ENCODE measurements at regions of chr15 and their contacts with region 1.

Region 1: GRCh38 chr15:46213551-46213950 is 578.7 kb downstream of the SQOR start:
- DNase-seq: no peak
- H3K4me3 ChIP-seq: no peak overlapping the region
- H3K27ac ChIP-seq: no peak overlapping the region
- H3K4me1 ChIP-seq: no peaks in the 10 kb centered on the region
- H3K27me3 ChIP-seq: no peaks in the 10 kb centered on the region
- CTCF ChIP-seq: no peak

Region 2: GRCh38 chr15:46059921-46060594 is 153.5 kb before region 1 on chr15:
- intact Hi-C with region 1: no loop called
- DNase-seq: no peak
- H3K4me3 ChIP-seq: no peak overlapping the region
- H3K27ac ChIP-seq: no peak overlapping the region
- H3K4me1 ChIP-seq: no peaks in the 10 kb centered on the region
- H3K27me3 ChIP-seq: no peaks in the 10 kb centered on the region
- CTCF ChIP-seq: no peak

Region 3: GRCh38 chr15:46322753-46323152 is 109.2 kb after region 1 on chr15:
- intact Hi-C with region 1: no loop called
- DNase-seq: no peak
- H3K4me3 ChIP-seq: no peak overlapping the region
- H3K27ac ChIP-seq: no peak overlapping the region
- H3K4me1 ChIP-seq: no peaks in the 10 kb centered on the region
- H3K27me3 ChIP-seq: no peaks in the 10 kb centered on the region
- CTCF ChIP-seq: no peak

Region 4: GRCh38 chr15:46442184-46442583 is 228.6 kb after region 1 on chr15:
- intact Hi-C with region 1: no loop called
- DNase-seq: no peak
- H3K4me3 ChIP-seq: no peak overlapping the region
- H3K27ac ChIP-seq: peak overlapping the region in 1 of 2 donors; percentile 6
- H3K4me1 ChIP-seq: no peaks in the 10 kb centered on the region
- H3K27me3 ChIP-seq: no peaks in the 10 kb centered on the region
- CTCF ChIP-seq: no peak

Region 5: DNA sequence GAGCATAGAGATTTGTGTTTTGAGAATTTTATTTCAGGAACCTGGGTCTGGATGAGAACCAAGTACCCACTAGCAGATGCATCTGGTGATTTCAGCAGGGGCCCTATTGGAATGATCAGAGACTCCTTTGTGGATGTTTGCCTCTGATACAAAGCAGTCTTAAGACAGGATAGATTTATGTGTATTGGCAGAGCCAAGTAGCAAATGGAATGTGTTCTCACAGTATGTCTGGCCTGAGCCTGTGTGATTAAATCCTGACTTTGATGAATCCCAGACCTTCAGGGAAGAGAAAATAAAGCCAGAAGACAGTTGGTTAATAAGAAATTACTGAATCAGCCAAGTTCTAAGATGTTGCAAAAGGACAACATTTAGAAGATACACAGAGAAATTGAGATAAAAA is 748.2 kb after region 1 on chr15:
- intact Hi-C with region 1: loop called (anchors 5 kb)
- DNase-seq: no peak
- H3K4me3 ChIP-seq: no peak overlapping the region
- H3K27ac ChIP-seq: no peak overlapping the region
- H3K4me1 ChIP-seq: no peaks in the 10 kb centered on the region
- H3K27me3 ChIP-seq: no peaks in the 10 kb centered on the region
- CTCF ChIP-seq: no peak

Measured in tibial artery (tissue), 4 donors.